Activated naive CD4-positive, alpha-beta T cell treated with anti-CD3 and anti-CD28 coated beads, Interleukin-2, amount 10 ng/mL, durations not matched to agents 7 days and 5 days (primary cell): ENCODE measurements at regions of chr11 and their contacts with region 1.

Region 1: DNA sequence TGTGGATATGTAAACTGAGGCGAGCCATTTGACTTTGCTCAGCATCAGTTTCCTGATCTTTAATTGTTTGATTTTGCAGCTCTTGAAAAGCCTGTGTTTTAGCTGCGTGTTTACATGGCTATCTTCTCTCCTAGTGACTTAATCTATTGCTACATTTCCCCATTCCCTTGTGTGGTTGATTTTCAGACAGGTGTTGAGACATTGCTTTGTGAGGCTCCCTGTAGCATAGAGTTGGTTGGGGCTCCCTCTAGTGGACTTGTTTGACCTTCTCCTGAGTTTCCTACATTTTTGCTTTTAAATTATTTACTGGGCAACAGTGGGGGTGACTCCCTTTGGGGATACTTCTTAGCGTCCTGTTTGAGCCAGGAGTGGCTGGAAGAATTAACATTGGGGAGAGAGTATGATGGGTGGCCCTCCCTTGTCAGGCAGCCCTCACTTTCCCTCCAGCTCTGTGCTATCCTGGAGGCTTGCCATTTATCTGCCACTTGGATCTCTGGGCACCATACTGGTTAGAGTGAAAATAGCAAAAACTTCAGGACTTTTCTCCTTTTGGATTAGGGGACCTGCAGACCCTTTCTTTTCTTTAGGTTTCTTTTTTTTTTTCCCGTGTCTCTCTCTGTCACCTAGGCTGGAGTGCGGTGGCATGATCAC is 9.2 kb upstream of the CBL start:
- DNase-seq: peak; percentile 82
- H3K4me3 Mint-ChIP-seq: no peak overlapping the region
- H3K27ac Mint-ChIP-seq: no peak overlapping the region
- H3K4me1 Mint-ChIP-seq: peaks cover 10% of the 10 kb centered on the region
- H3K27me3 Mint-ChIP-seq: peaks cover 22% of the 10 kb centered on the region

Region 2: DNA sequence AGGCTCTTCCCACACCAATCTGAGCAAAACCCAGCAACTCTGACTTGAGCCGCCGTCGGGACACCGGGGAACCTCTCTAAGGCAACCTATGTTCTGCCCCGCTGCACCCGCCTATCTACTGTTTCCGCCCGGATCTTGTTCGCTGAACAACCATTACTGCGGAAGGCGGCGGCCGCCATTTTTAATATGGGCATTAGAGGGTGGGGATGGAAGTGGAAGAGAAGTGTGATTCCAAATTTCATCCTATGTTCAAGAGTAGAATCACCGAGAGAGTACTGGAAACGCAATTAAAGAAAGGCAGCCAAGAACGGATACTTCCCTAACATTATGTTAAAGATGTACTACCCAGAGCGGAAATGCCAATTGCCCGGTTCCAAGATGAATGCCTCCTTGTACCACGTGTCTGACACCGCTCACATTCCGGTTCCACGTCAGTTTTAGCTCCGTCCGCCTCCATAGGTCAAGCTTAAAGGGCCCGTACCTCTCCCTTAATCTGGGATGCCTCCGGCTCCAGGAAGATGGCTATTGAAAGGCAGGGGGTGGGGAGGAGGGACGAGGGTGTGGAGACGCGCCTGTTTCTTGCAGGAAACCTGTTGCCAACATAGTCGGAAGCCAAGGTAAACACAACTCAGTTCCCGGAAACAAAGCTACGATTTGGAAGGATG is 95.1 kb before region 1 on chr11 and contains the start of gene DPAGT1:
- CTCF ChIA-PET with region 1: interaction called, 13 read pairs
- DNase-seq: peak; percentile 90
- H3K4me3 Mint-ChIP-seq: peak within 1 kb of the TSS; percentile 92
- H3K27ac Mint-ChIP-seq: peak within 1 kb of the TSS; percentile 98
- H3K4me1 Mint-ChIP-seq: peaks cover 68% of the 10 kb centered on the region
- H3K27me3 Mint-ChIP-seq: peaks cover 5% of the 10 kb centered on the region

Region 3: GRCh38 chr11:119144825-119145486 is 52.0 kb before region 1 on chr11:
- CTCF ChIA-PET with region 1: interaction called, 10 read pairs
- DNase-seq: peak; percentile 51
- H3K4me3 Mint-ChIP-seq: no peak overlapping the region
- H3K27ac Mint-ChIP-seq: no peak overlapping the region
- H3K4me1 Mint-ChIP-seq: peaks cover 17% of the 10 kb centered on the region
- H3K27me3 Mint-ChIP-seq: peaks cover 66% of the 10 kb centered on the region

Region 4: GRCh38 chr11:119181677-119182412 is 15.1 kb before region 1 on chr11:
- CTCF ChIA-PET with region 1: interaction called, 11 read pairs
- DNase-seq: no peak
- H3K4me3 Mint-ChIP-seq: no peak overlapping the region
- H3K27ac Mint-ChIP-seq: no peak overlapping the region
- H3K4me1 Mint-ChIP-seq: peaks cover 22% of the 10 kb centered on the region
- H3K27me3 Mint-ChIP-seq: peaks cover 12% of the 10 kb centered on the region

Region 5: DNA sequence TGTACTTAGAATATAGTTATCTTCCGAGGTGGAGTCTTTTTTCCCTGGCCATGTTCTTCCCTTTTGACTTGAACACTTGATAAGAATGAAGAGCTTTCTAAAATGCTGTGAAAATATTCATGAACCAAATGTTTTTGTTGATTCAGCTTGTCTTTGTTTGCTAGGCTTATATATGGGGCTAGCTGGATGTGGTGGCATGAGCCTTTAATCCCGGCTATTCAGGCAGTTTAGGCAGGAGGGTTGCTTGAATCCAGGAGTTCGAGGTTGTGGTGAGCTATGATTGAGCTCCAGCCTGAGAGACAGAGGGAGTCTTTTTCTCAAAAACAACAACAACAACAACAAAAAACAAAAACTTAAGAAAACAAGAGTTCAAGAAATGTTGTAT is 32.3 kb after region 1 on chr11:
- CTCF ChIA-PET with region 1: no interaction called
- DNase-seq: no peak
- H3K4me3 Mint-ChIP-seq: peak overlapping the region; percentile 20
- H3K27ac Mint-ChIP-seq: peak overlapping the region; percentile 68
- H3K4me1 Mint-ChIP-seq: peaks cover 35% of the 10 kb centered on the region
- H3K27me3 Mint-ChIP-seq: no peaks in the 10 kb centered on the region

Region 6: GRCh38 chr11:119356349-119357031 is 159.5 kb after region 1 on chr11:
- CTCF ChIA-PET with region 1: no interaction called
- DNase-seq: peak; percentile 83
- H3K4me3 Mint-ChIP-seq: peak overlapping the region; percentile 85
- H3K27ac Mint-ChIP-seq: peak overlapping the region; percentile 69
- H3K4me1 Mint-ChIP-seq: peaks cover 21% of the 10 kb centered on the region
- H3K27me3 Mint-ChIP-seq: peaks cover 85% of the 10 kb centered on the region